OCI-LY7 (cell line): ENCODE measurements at regions of chr3 and their contacts with region 1.

Region 1: DNA sequence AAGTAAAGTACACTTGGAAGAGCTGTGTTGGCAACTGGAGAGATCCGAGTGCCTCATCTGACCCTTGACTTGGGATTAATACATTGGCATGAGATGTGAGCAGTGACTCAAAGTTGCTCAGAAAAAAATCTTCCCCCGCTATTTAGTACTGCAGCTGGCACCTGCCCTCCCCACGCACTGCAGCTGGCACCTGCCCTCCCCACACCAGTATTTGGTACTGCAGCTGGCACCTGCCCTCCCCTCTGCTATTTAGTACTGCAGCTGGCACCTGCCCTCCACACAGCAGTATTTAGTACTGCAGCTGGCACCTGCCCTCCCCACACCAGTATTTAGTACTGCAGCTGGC is 3.9 kb upstream of the MUC20 start:
- DNase-seq: no peak
- H3K4me3 ChIP-seq: no peak overlapping the region
- H3K27ac ChIP-seq: no peak overlapping the region
- H3K4me1 ChIP-seq: peaks cover 5% of the 10 kb centered on the region
- CTCF ChIP-seq: no peak

Region 2: DNA sequence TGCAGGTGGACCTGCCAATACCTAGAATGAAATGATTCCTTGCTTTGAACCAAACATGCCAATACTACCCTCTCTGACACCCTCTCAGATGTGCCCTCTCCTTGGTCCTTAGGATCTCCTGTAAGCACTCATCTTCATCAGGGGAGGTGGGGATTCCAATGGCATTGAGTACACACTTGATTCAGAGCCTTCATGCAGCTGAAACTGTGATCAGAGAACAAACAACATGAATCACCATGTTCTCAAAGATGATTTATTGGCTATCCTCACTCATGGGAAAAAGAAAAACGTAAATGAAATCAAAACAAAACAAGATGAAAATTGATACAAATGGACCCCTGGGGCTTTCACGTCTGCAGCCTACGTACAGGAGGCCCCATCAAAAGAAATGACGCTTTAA is 648.8 kb before region 1 on chr3:
- CTCF ChIA-PET with region 1: no interaction called
- POLR2A ChIA-PET with region 1: interaction called, 10 read pairs
- intact Hi-C with region 1: no loop called
- DNase-seq: no peak
- H3K4me3 ChIP-seq: no peak overlapping the region
- H3K27ac ChIP-seq: no peak overlapping the region
- H3K4me1 ChIP-seq: peaks cover 22% of the 10 kb centered on the region
- CTCF ChIP-seq: no peak

Region 3: DNA sequence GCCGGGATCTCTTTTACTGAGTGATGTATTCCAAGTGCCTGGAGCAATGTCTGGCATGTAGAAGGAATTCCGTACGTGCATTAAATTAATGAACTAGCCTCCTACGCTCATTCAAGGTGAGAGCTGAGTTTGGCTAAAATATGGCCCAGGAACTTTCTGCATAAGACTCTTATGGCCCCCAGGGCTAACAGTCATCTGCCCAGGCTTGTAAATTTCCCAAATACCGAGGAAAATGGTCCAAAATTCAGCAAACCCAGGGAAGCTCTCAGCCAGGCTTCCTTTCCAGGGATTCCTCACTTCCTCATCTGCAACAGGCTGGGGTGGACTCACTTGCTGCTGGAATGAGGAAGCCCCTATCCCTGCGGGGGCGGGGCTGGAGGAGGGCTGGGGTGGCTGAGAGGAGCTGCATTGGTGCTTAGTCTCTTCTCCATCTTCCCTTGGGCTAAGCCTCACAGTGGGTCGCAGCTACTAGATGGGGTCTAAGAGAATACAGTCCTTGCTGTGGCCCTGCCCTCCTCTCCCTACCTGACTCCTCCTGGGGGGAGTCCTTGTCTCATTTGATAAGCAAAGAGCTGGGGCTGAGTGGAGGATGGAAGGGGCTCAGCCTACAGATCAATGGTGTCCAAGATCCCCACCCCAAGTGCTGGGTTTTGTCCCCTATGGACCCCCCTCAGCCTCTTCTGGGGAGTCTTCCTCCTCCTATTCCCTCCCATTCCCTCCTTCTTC is 104.6 kb before region 1 on chr3:
- CTCF ChIA-PET with region 1: no interaction called
- POLR2A ChIA-PET with region 1: no interaction called
- intact Hi-C with region 1: loop called (anchors 5 kb)
- DNase-seq: no peak
- H3K4me3 ChIP-seq: no peak overlapping the region
- H3K27ac ChIP-seq: no peak overlapping the region
- H3K4me1 ChIP-seq: peaks cover 13% of the 10 kb centered on the region
- CTCF ChIP-seq: no peak

Region 4: GRCh38 chr3:195774917-195775316 is 58.1 kb after region 1 on chr3:
- CTCF ChIA-PET with region 1: no interaction called
- POLR2A ChIA-PET with region 1: no interaction called
- intact Hi-C with region 1: no loop called
- DNase-seq: no peak
- H3K4me3 ChIP-seq: no peak overlapping the region
- H3K27ac ChIP-seq: no peak overlapping the region
- H3K4me1 ChIP-seq: no peaks in the 10 kb centered on the region
- CTCF ChIP-seq: peak; percentile 63; the same call in 1 of the 2 replicates

Region 5: DNA sequence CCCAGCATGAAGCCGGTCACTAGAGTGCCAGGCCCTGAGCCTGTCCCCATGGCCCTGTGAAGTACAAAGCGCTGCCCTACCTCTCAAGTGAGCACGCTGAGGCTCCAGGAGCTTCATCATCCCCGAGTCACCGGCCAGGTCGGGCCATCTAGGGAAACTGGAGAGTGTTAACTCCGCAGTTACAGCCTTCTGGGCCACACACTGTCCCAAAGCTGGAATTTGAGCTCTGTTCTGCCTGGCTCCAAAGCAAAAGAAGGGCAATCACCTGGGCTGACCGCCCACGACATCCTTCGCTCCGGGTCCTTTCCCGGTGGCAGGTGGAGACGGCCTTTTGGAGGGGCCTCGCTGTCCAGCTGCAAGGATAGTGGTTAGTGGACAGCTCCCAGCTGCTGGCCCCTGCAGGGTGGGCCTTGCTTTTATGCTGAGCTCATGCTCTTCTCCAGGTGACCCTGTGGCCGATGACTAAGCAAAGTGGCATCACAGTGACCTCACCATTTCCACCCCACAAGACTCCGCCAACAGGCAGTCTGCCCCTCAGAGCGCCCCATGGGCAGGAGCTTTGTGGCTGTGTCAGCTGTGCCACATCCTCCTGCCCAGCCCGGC is 98.4 kb after region 1 on chr3:
- CTCF ChIA-PET with region 1: no interaction called
- POLR2A ChIA-PET with region 1: no interaction called
- intact Hi-C with region 1: no loop called
- DNase-seq: no peak
- H3K4me3 ChIP-seq: no peak overlapping the region
- H3K27ac ChIP-seq: no peak overlapping the region
- H3K4me1 ChIP-seq: no peaks in the 10 kb centered on the region
- CTCF ChIP-seq: no peak